Heart left ventricle (tissue), 16 donors: ENCODE measurements at regions of chr6 and their contacts with region 1.

Region 1: DNA sequence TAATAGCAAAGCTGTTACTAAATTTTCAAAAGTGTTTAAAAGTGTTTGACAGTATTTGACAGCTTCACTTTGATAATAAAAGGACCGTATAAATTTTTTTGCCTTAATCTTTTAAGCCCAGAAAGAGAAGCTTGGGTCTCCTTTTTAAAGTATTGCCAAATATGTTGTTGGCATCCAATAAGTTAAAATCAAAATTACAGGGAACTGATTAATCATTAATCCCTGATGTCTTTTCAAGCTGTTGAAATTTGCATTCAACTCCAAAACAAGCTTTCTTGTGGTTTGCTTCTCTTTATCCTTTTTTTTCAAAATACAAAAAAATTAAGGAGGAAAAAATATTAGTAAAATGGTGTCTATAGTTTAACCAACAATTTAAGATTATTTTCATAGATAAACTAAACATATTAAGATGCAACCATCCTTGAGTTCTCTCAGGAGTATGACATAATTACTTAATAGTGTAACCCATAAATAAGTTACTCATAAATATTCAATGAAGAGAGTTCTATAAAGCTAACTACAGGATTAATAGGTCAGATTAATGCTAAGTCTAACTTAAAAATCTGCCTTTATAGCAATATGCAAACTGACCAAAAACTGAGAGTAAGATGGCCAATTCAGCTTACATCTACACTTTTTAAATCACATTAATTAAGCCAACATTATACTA is 27.0 kb upstream of the CALHM6 start:
- DNase-seq: no peak
- ATAC-seq: no peak
- H3K4me3 ChIP-seq: no peak overlapping the region
- H3K27ac ChIP-seq: no peak overlapping the region
- H3K4me1 ChIP-seq: peaks cover 0 to 12% (median 7%) of the 10 kb centered on the region in 12 donors
- H3K27me3 ChIP-seq: no peaks in the 10 kb centered on the region
- CTCF ChIP-seq: no peak
- POLR2A ChIP-seq: no peak

Region 2: DNA sequence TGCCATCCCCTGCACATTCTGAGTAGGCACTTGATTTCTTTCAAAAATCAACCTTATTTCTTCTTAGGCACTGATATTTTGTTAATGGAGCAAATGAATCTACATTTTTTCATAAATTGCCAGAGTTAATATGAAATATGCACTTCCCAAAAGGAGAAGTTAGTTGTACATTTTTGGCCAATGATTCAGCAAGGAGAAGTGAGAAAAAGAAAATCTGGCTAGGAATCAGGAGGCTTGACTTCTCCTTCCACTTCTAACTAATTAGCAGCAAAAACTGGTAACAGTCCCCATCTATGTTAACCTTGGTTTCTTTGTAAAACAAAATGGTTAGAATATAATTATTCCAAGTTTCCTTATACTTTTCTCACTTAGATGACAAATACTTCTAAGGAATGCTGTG is 70.4 kb before region 1 on chr6:
- intact Hi-C with region 1: loop called in 1 of 10 experiments (anchors 5 kb)
- DNase-seq: no peak
- ATAC-seq: no peak
- H3K4me3 ChIP-seq: no peak overlapping the region
- H3K27ac ChIP-seq: peak overlapping the region in 1 of 12 donors; percentile 68
- H3K4me1 ChIP-seq: peaks cover 0 to 48% (median 0%) of the 10 kb centered on the region in 12 donors
- H3K27me3 ChIP-seq: no peaks in the 10 kb centered on the region
- CTCF ChIP-seq: no peak
- POLR2A ChIP-seq: no peak

Region 3: DNA sequence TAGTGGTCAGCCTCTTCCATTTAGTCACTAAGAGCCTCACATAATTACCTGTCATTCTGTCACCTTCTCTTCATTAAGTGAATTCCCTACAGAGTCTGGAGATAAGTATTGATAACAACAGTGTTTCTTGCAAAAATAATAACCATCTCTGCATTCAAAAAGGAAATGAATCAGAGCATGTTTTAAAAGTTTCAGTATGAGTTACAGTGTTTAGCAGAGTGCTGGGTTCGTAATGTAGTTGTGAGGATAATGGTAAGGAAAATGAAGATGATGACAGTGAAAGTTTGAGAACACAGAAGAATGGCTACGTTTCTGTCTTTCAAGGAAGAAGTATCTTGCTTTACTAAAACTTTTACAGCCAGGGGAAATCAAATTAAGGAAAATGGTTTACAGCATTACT is 363.4 kb after region 1 on chr6:
- intact Hi-C with region 1: no loop called
- DNase-seq: no peak
- ATAC-seq: no peak
- H3K4me3 ChIP-seq: no peak overlapping the region
- H3K27ac ChIP-seq: no peak overlapping the region
- H3K4me1 ChIP-seq: no peaks in the 10 kb centered on the region
- H3K27me3 ChIP-seq: peaks cover 0 to 7% (median 0%) of the 10 kb centered on the region in 9 donors
- CTCF ChIP-seq: no peak
- POLR2A ChIP-seq: no peak

Region 4: GRCh38 chr6:117404548-117404947 is 970.4 kb after region 1 on chr6:
- intact Hi-C with region 1: no loop called
- DNase-seq: no peak
- ATAC-seq: no peak
- H3K4me3 ChIP-seq: no peak overlapping the region
- H3K27ac ChIP-seq: no peak overlapping the region
- H3K4me1 ChIP-seq: no peaks in the 10 kb centered on the region
- H3K27me3 ChIP-seq: no peaks in the 10 kb centered on the region
- CTCF ChIP-seq: peak in 1 of 12 donors; percentile 17
- POLR2A ChIP-seq: no peak